A673 (cell line): ENCODE measurements at regions of chr18 and their contacts with region 1.

Region 1: DNA sequence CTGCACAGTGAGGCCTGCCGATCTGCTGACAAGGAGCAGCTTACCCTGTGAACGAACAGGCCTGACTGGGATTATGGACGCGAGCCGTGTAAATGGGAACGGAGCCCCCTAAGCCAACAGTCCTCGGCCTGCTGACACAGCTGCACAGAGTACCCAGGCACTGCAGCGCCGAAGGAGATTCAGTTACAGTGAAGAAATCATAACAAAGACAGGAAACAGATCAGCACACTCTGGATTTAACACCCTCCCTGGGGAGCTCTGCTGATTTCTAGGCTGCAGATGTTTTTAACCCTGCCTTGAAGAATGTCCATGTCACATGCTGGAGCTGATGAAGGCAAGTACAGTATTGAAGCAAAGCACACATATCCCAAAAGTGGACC is 43.4 kb downstream of the COLEC12 start:
- DNase-seq: peak; percentile 94
- H3K4me3 ChIP-seq: no peak overlapping the region
- H3K27ac ChIP-seq: peak overlapping the region; percentile 76
- H3K4me1 ChIP-seq: peaks cover 29% of the 10 kb centered on the region
- H3K27me3 ChIP-seq: no peaks in the 10 kb centered on the region
- CTCF ChIP-seq: no peak

Region 2: DNA sequence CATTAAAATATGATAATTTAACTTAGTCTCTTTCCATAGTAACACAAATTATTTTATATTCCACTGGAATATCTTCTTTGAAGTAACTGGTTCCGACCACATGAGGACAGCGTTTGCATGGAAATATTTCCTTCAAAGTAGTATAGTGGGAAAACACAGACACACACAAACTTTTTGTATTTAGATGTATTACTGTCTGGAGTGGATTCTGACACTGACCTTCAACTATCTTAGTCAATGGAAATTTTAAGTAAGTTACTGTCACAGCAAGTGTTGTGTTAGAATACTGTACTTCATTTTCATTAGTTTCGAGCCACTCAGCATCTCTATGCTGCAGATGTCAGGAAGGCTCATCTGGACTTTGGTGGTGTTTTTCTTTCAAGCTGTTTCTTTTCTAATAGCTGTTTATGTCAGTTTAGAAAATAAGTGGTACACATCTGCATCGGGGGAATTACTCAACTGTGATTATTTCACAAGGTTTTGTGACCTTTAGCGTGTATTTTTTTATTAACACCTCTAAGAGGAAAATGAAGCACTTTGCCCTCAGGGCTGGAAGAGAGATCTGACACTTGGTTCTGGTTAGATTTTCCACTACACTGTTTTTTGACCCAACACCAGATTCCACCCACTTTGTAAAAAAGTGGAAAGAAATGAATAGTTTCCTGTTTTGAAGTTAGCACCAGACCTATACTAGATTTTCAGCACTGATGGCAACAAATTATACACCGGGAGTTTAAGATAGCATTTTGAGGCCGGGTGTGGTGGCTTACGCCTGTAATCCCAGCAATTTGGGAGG is 170.4 kb before region 1 on chr18:
- CTCF ChIA-PET with region 1: no interaction called
- POLR2A ChIA-PET with region 1: no interaction called
- intact Hi-C with region 1: no loop called
- DNase-seq: peak; percentile 43
- H3K4me3 ChIP-seq: no peak overlapping the region
- H3K27ac ChIP-seq: no peak overlapping the region
- H3K4me1 ChIP-seq: no peaks in the 10 kb centered on the region
- H3K27me3 ChIP-seq: no peaks in the 10 kb centered on the region
- CTCF ChIP-seq: peak; percentile 65

Region 3: DNA sequence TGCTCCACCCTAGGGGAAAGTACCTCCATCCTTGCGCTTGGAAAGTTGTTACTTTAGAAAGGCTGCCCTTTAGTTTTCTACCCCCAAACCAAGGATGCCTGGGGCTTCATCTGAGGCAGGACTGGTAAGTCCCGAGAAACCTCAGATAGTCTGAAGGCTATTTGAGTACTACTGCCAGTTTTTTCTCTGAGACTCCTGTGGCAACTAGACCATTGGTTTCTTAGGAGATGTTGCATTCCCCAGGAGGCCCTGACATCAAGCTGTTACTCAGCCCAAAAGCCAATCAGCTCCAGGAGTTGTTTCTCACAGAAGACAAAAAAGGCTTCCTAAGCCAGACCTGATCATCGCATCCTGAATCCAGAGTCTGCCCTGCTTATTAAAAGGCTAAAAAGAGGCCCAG is 23.8 kb before region 1 on chr18:
- CTCF ChIA-PET with region 1: no interaction called
- POLR2A ChIA-PET with region 1: interaction called, 11 read pairs
- intact Hi-C with region 1: no loop called
- DNase-seq: no peak
- H3K4me3 ChIP-seq: no peak overlapping the region
- H3K27ac ChIP-seq: no peak overlapping the region
- H3K4me1 ChIP-seq: no peaks in the 10 kb centered on the region
- H3K27me3 ChIP-seq: no peaks in the 10 kb centered on the region
- CTCF ChIP-seq: no peak